Colonic mucosa (tissue), 4 donors: ENCODE measurements at regions of chr22 and their contacts with region 1.

Region 1: DNA sequence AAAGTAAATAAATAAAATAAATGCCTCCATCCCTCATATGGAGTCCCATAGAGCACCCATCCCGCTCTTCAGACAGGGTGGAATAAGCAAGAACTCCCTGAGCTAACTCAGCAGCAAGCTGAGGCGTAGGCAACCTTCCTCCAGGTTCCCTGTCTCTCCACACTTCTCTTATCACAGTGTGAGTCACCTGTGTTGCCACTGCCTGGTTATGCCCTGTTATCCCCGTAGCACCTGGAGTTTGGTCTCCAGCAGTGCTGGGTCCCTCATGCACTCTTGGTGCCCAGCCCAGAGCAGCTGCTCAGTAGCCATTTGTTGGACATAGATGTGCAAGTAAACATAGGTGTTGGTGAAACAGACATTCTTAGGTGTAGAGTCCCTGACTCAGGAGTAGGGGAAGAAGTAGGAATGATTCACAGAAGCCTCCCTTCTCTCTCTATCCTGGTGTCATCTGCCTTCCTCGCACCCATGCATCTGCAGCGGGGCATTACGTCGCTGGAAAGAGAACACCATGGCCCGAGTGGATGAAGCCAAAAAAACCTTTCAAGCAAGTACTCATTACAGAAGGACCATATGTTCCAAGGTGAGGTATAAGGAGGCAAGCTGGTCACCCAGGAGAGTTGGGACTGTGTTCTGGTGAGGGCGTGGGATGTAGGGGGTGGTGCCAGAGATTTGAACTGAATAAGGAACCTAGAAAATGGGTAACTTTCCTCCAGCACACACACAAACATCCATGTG is 56.0 kb downstream of the PISD start:
- DNase-seq: no peak
- H3K4me3 ChIP-seq: no peak overlapping the region
- H3K27ac ChIP-seq: no peak overlapping the region
- H3K4me1 ChIP-seq: no peaks in the 10 kb centered on the region
- H3K27me3 ChIP-seq: no peaks in the 10 kb centered on the region
- CTCF ChIP-seq: no peak

Region 2: GRCh38 chr22:31556627-31557203 is 49.3 kb before region 1 on chr22:
- intact Hi-C with region 1: no loop called
- DNase-seq: no peak
- H3K4me3 ChIP-seq: no peak overlapping the region
- H3K27ac ChIP-seq: no peak overlapping the region
- H3K4me1 ChIP-seq: no peaks in the 10 kb centered on the region
- H3K27me3 ChIP-seq: no peaks in the 10 kb centered on the region
- CTCF ChIP-seq: peak; percentile 41

Region 3: DNA sequence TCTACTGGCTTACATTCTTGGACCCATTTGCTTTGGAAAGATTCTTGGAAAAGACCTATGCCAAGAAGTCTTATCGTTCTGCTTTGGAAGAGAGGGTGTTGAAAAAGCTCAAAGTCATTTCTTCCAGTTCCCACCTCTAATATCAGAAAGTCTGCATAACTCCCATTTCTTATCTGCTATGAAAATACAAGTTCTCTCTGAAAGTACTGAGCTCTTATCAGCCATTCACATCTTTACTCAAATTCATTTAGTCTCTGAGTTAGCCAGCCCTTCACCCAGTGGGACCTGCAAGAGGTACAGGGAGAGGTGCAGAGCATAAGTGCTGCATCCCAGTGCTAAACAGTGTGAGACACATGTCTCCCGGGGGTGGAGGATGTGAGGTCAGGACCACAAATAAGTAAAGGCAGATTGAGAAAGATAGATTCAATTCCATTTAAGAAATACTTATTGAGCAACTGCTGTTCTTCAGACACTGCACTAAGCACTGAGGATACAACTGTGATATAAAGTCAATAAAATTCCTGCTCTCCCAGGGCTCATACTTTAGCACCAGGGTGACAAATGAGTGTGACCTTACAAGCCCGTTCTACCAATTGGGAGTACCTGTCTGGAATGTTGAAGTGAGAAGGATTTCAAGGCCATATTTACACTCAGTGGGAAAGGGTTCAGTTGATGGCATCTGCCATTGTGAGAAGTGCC is 20.7 kb before region 1 on chr22:
- intact Hi-C with region 1: loop called (anchors 1 kb)
- DNase-seq: no peak
- H3K4me3 ChIP-seq: no peak overlapping the region
- H3K27ac ChIP-seq: no peak overlapping the region
- H3K4me1 ChIP-seq: no peaks in the 10 kb centered on the region
- H3K27me3 ChIP-seq: no peaks in the 10 kb centered on the region
- CTCF ChIP-seq: no peak